AG04450 (cell line): ENCODE measurements at regions of chr5 and their contacts with region 1.

Region 1: GRCh38 chr5:38265546-38266179 is 7.3 kb downstream of the EGFLAM start:
- DNase-seq: peak; percentile 15
- H3K4me3 ChIP-seq: no peak overlapping the region
- H3K27ac ChIP-seq: no peak overlapping the region
- H3K27me3 ChIP-seq: peaks cover 16% of the 10 kb centered on the region
- CTCF ChIP-seq: peak; percentile 70

Region 2: GRCh38 chr5:38023799-38024198 is 241.9 kb before region 1 on chr5:
- CTCF ChIA-PET with region 1: no interaction called
- POLR2A ChIA-PET with region 1: no interaction called
- DNase-seq: no peak
- H3K4me3 ChIP-seq: no peak overlapping the region
- H3K27ac ChIP-seq: no peak overlapping the region
- H3K27me3 ChIP-seq: peaks cover 22% of the 10 kb centered on the region
- CTCF ChIP-seq: peak; percentile 22; the same call in 1 of the 2 replicates

Region 3: DNA sequence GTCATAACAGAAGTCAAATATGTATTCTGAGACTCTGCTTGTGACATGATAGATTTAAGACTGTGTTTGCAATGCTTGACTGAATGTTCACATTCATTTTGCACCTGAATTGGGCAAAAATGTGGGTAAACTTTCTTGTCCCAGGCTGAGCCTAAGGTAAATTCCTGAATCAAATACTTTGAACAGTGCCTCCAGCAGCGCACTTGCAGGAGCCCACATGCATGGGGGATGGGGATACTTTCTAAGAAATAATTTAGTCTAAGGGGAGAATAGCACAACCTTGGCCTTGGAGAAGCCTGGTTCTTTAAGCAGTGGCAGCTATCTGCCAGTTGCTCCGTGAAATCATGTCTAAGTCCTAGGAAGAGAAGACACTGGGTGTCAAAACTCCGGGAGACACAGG is 170.8 kb before region 1 on chr5:
- CTCF ChIA-PET with region 1: no interaction called
- POLR2A ChIA-PET with region 1: no interaction called
- DNase-seq: no peak
- H3K4me3 ChIP-seq: no peak overlapping the region
- H3K27ac ChIP-seq: no peak overlapping the region
- H3K27me3 ChIP-seq: no peaks in the 10 kb centered on the region
- CTCF ChIP-seq: no peak

Region 4: DNA sequence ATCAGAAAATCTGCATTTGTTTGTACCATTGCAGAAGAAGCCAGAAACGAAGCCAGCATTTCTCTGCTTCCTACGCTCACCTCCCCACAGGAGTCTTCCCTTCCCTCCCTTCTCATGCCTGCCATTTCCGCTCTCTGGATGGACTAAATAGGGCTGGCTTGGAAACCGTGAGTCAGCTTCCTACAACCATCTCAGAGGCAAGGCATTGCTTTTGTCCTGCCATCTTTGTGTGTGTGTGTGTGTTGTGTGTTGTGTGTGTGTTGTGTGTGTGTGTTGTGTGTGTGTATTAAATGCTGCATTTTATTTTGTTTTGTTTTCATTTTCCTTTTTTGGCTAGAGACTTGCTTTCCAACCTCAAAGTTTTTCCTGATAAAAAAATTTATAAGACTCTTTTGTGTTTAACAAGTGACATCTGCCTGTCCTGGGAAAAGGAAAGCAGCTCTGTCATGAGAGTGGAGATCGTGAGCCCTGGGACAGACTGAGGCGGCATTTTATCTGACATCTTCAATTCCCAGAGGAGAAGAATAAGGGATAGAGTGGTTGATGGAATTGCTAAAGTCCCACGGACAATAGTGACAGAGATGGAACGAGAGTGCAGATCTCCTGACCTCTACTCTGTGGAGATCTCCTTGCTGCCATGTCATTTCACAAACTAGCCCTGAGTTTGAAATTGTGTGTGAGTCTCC is 14.8 kb before region 1 on chr5:
- CTCF ChIA-PET with region 1: interaction called, 15 read pairs
- POLR2A ChIA-PET with region 1: no interaction called
- DNase-seq: no peak
- H3K4me3 ChIP-seq: no peak overlapping the region
- H3K27ac ChIP-seq: no peak overlapping the region
- H3K27me3 ChIP-seq: peaks cover 9% of the 10 kb centered on the region
- CTCF ChIP-seq: no peak

Region 5: GRCh38 chr5:38316544-38317224 is 51.0 kb after region 1 on chr5:
- CTCF ChIA-PET with region 1: interaction called, 13 read pairs
- POLR2A ChIA-PET with region 1: no interaction called
- DNase-seq: no peak
- H3K4me3 ChIP-seq: no peak overlapping the region
- H3K27ac ChIP-seq: no peak overlapping the region
- H3K27me3 ChIP-seq: peaks cover 2% of the 10 kb centered on the region
- CTCF ChIP-seq: 0 out of 2 replicates have a peak, but pooled peaks have one; percentile 6

Region 6: GRCh38 chr5:38404667-38405276 is 139.1 kb after region 1 on chr5:
- CTCF ChIA-PET with region 1: no interaction called
- POLR2A ChIA-PET with region 1: no interaction called
- DNase-seq: no peak
- H3K4me3 ChIP-seq: no peak overlapping the region
- H3K27ac ChIP-seq: no peak overlapping the region
- H3K27me3 ChIP-seq: peaks cover 33% of the 10 kb centered on the region
- CTCF ChIP-seq: 0 out of 2 replicates have a peak, but pooled peaks have one; percentile 19